ENCODE measurements at regions of chr3 and their contacts with region 1.

Region 1: DNA sequence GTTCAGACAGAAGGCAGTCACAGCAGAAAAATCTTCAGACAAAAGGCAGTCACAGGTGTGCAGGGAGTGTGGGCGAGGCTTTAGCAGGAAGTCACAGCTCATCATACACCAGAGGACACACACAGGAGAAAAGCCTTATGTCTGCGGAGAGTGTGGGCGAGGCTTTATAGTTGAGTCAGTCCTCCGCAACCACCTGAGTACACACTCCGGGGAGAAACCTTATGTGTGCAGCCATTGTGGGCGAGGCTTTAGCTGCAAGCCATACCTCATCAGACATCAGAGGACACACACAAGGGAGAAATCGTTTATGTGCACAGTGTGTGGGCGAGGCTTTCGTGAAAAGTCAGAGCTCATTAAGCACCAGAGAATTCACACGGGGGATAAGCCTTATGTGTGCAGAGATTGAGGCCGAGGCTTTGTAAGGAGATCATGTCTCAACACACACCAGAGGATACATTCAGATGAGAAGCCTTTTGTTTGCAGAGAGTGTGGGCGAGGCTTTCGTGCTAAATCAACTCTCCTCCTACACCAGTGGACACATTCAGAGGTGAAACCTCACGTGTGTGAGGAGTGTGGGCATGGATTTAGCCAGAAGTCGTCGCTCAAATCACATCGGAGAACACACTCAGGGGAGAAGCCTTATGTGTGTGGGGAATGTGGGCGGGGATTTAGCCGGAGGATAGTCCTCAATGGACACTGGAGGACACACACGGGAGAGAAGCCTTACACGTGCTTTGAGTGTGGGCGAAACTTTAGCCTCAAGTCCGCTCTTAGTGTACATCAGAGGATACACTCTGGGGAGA is 27.7 kb downstream of the ZNF589 start:
- DNase-seq: peak; percentile 55 to 90 (median 76)
- ATAC-seq: peak; percentile 95
- H3K4me3 ChIP-seq: peak overlapping the region; percentile 28
- H3K4me3 Mint-ChIP-seq: peak overlapping the region; percentile 74
- H3K27ac ChIP-seq: peak overlapping the region; percentile 57 to 67
- H3K27ac Mint-ChIP-seq: peak overlapping the region; percentile 87
- H3K4me1 ChIP-seq: peaks cover 29% of the 10 kb centered on the region
- H3K4me1 Mint-ChIP-seq: peaks cover 38% of the 10 kb centered on the region
- H3K27me3 ChIP-seq: no peaks in the 10 kb centered on the region
- H3K27me3 Mint-ChIP-seq: no peaks in the 10 kb centered on the region
- CTCF ChIP-seq: no peak

Region 2: DNA sequence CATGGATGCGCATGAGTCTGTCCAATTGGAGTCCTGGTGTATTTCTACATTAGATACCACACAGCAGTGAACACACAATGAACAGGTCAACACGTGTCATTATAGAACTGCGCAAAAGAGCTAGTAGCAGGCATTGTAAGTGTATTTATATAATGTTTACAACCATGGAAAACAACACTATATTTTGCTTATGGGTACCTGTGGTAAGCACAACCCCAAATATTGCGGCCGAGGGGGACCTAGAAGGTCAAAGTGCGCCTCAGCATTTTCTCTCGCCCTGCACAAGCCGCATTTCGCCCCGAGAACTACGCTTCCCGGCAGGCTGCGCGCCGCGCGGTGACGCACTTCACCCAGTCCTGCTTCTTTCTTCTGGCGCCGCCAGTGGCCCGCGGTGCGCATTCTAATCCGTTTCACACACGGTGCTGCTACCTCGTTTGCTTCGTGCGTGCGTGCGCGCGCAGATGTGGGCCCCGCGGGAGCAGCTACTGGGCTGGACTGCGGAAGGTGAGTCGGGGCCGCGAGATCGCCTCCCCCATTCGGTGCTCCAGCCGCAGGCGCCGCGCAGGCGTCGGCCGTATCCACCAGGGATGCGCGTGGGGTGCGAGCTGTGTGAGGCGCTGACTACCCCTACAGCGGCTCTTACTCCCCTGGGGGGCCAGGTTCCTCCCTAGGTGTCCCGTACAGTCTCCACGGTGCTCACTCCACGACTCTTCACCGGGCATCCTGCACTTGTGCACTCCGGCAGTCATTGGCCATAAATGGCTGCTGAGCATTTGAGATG is 27.7 kb before region 1 on chr3 and contains the start of gene ZNF589:
- CTCF ChIA-PET with region 1: interaction called, 14 read pairs
- POLR2A ChIA-PET with region 1: interaction called, 32 read pairs
- intact Hi-C with region 1: loop called (anchors 1 kb)
- DNase-seq: peak; percentile 89 to 98 (median 94)
- ATAC-seq: peak; percentile 98
- H3K4me3 ChIP-seq: peak within 1 kb of the TSS; percentile 93
- H3K4me3 Mint-ChIP-seq: peak within 1 kb of the TSS; percentile 93
- H3K27ac ChIP-seq: peak within 1 kb of the TSS; percentile 85
- H3K27ac Mint-ChIP-seq: peak within 1 kb of the TSS; percentile 92
- H3K4me1 ChIP-seq: peaks cover 33% of the 10 kb centered on the region
- H3K4me1 Mint-ChIP-seq: peaks cover 23% of the 10 kb centered on the region
- H3K27me3 ChIP-seq: no peaks in the 10 kb centered on the region
- H3K27me3 Mint-ChIP-seq: no peaks in the 10 kb centered on the region
- CTCF ChIP-seq: no peak
- total RNA-seq, gene ZNF589: 18.3 to 20.5 TPM